ENCODE measurements at regions of chr1 and their contacts with region 1.

Region 1: DNA sequence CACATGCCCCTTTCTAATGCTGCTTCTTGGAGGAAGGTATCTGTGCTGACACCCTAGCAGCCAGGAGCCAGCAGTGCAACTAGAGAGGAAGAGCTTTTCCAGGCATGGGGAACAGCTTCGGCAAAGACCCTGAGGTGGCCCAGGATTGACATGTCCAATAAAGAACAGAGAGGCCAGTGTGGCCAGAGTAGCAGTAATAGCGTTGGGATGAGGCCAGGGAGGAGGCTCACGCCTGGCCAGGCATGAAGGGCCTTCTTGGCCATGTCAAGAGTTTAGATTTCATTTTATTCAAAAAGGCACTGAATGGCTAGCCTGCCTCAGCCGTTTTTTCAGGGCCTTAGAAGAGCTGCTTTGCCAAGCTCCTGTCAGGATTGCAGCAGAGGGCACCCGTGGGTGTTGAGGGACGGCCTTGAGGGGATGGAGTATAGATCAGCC is 16.3 kb upstream of the ADAMTSL4 start:
- DNase-seq: no peak
- H3K4me3 ChIP-seq: no peak overlapping the region
- H3K27ac ChIP-seq: no peak overlapping the region
- H3K4me1 ChIP-seq: no peaks in the 10 kb centered on the region
- H3K27me3 ChIP-seq: no peaks in the 10 kb centered on the region
- CTCF ChIP-seq: no peak
- POLR2A ChIP-seq: no peak

Region 2: GRCh38 chr1:150486964-150487762 is 45.7 kb before region 1 on chr1 and contains the start of gene TARS2:
- CTCF ChIA-PET with region 1: interaction called, 8 read pairs
- POLR2A ChIA-PET with region 1: no interaction called
- dilution Hi-C with region 1: no loop called
- intact Hi-C with region 1: loop called (anchors 1 kb)
- DNase-seq: peak; percentile 99
- H3K4me3 ChIP-seq: peak within 1 kb of the TSS; percentile 53 to 81 (median 65)
- H3K27ac ChIP-seq: peak within 1 kb of the TSS; percentile 63
- H3K4me1 ChIP-seq: peaks cover 7% of the 10 kb centered on the region
- H3K27me3 ChIP-seq: no peaks in the 10 kb centered on the region
- CTCF ChIP-seq: no peak
- POLR2A ChIP-seq: peak; percentile 84
- total RNA-seq, gene TARS2: 20.6 and 21.5 TPM in 2 replicates

Region 3: GRCh38 chr1:150507905-150508854 is 24.7 kb before region 1 on chr1 and contains the start of gene ECM1:
- CTCF ChIA-PET with region 1: interaction called, 20 read pairs
- POLR2A ChIA-PET with region 1: no interaction called
- dilution Hi-C with region 1: no loop called
- intact Hi-C with region 1: no loop called
- DNase-seq: peak; percentile 71
- H3K4me3 ChIP-seq: no peak within 1 kb of the TSS
- H3K27ac ChIP-seq: peak within 1 kb of the TSS; percentile 34
- H3K4me1 ChIP-seq: peaks cover 10% of the 10 kb centered on the region
- H3K27me3 ChIP-seq: no peaks in the 10 kb centered on the region
- CTCF ChIP-seq: no peak
- POLR2A ChIP-seq: no peak
- total RNA-seq, gene ECM1: 7.2 and 7.3 TPM in 2 replicates

Region 4: DNA sequence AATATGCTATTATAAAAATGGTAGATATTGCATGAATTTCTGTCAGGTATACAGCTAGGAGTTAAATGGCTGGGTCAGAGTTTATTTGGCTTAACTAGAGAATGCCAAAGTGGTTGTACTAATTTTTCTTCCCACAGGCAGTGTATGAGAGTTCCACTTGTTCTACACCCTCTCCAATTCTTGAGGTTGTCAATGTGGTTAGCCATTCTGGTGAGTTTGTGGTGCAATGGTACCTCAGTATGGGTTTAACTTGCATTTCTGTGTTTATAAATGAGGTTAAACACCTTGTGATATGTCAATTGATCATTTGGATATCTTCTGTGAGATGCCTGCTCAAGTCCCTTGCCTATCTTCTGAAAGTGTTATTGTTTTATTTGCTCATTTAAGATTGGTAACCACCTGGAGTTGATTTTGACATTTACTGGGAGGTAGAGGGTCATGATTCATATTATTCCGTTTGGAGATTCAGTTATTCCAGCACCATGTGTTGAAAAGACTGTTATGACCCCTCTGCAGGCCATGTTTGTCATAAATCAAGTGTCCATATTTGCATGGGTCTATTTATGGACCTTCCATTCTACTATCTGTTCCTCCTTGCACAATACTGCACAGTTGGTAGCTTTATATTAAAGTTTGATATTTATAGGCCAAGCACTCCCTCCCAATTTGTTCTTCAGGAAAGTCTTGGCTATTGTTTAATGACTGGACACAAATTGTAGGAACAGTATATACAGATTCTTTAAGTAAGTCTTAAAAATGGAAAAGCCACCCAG is 11.5 kb before region 1 on chr1:
- CTCF ChIA-PET with region 1: interaction called, 24 read pairs
- POLR2A ChIA-PET with region 1: no interaction called
- dilution Hi-C with region 1: no loop called
- intact Hi-C with region 1: no loop called
- DNase-seq: no peak
- H3K4me3 ChIP-seq: no peak overlapping the region
- H3K27ac ChIP-seq: no peak overlapping the region
- H3K4me1 ChIP-seq: peaks cover 3% of the 10 kb centered on the region
- H3K27me3 ChIP-seq: no peaks in the 10 kb centered on the region
- CTCF ChIP-seq: no peak
- POLR2A ChIP-seq: no peak

Measured in endothelial cell of umbilical vein (primary cell).